Right ventricle myocardium inferior (tissue), 1 donor: ENCODE measurements at regions of chr15 and their contacts with region 1.

Region 1: DNA sequence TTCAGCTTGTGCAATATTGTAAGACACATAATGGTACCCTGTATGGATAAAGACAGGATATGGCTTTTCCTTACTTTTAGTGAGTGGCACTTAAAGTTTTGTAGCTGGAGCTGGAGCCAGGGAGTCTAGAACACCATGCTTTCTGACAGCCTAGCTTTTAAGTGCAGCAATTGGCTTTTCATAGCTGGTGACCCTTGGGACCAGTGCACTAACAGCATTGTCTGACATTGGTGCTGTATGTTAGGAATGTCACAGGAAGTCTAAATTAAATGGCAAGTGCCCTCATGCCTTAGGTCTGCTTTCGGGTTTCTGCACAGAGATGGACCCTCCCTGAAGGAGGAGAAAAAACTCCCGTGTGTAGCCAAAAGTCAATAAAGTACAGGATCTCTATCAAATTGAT is 628.2 kb downstream of the NR2F2 start:
- DNase-seq: no peak
- ATAC-seq: no peak

Region 2: GRCh38 chr15:97014001-97014400 is 55.3 kb after region 1 on chr15:
- intact Hi-C with region 1: loop called (anchors 10 kb)
- DNase-seq: no peak
- ATAC-seq: no peak

Region 3: GRCh38 chr15:97443066-97443465 is 484.3 kb after region 1 on chr15:
- intact Hi-C with region 1: no loop called
- DNase-seq: no peak
- ATAC-seq: no peak